ENCODE measurements at regions of chr11 and their contacts with region 1.

Region 1: GRCh38 chr11:9015677-9016076 is 11.9 kb upstream of the NRIP3 start:
- DNase-seq: peak in 2 of 3 donors; percentile 38 to 71
- ATAC-seq: peak; percentile 92 to 95 (median 94)
- H3K4me3 ChIP-seq: no peak overlapping the region
- H3K27ac ChIP-seq: no peak overlapping the region
- H3K4me1 ChIP-seq: no peaks in the 10 kb centered on the region
- H3K27me3 ChIP-seq: no peaks in the 10 kb centered on the region
- CTCF ChIP-seq: peak; percentile 68 to 82 (median 80)
- POLR2A ChIP-seq: no peak

Region 2: GRCh38 chr11:9137293-9138132 is 121.8 kb after region 1 on chr11:
- intact Hi-C with region 1: loop called in 1 of 2 experiments (anchors 10 kb)
- DNase-seq: peak; percentile 71 to 72 (median 71)
- ATAC-seq: peak; percentile 80 to 95 (median 92)
- H3K4me3 ChIP-seq: no peak overlapping the region
- H3K27ac ChIP-seq: no peak overlapping the region
- H3K4me1 ChIP-seq: peaks cover 0 to 21% (median 10%) of the 10 kb centered on the region in 4 donors
- H3K27me3 ChIP-seq: no peaks in the 10 kb centered on the region
- CTCF ChIP-seq: peak; percentile 81 to 89 (median 87)
- POLR2A ChIP-seq: no peak

Region 3: DNA sequence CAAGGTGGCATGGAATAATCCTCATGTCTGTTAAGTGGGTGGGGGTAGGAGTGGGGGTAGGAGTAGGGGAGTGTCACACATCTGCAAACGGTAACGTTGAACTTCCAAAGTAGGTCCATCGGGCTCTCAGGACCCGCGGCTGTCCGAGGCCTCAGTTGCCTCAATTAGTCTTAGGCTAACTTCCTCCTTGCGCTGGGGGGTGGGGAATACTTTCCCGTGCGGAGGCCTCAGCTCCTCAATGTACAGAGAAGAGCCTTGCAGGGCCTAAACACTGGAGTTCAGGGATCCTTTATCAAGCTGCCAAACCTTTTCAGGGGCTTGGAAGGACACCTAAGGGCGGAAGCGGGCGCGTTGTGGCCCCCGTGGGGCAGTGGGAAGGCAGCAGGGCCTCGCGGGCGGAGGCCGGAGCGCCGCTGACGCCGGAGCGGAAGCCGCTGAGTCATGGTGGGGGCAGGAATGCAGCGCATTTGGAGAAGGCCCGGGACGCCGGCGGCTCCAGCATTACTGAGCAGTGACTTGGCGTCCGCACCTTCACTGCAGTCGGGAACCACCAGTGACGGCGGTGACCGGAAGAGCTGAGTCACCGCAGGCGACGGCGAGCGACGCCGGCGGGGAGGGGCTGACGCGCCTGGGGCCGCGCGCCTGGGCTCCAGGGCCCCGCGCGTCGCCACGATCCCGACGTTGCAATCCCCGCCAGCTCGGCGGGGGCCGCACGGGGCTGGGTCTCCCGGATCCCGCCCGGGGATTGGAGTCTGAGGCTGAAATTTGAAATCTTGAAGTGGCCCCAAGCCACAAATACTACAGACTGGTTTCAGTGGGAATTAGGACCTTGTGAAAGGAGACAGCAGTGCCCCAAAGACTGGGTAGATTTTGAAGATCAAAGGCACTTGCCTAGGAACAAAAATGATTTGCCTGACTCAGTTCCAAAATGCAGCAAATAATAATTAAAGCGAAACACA is 348.6 kb after region 1 on chr11:
- intact Hi-C with region 1: no loop called
- DNase-seq: peak; percentile 92 to 97 (median 96)
- ATAC-seq: peak; percentile 98 to 99 (median 99)
- H3K4me3 ChIP-seq: peak overlapping the region; percentile 32 to 60 (median 41)
- H3K27ac ChIP-seq: peak overlapping the region; percentile 90 to 93 (median 93)
- H3K4me1 ChIP-seq: no peaks in the 10 kb centered on the region
- H3K27me3 ChIP-seq: no peaks in the 10 kb centered on the region
- CTCF ChIP-seq: no peak
- POLR2A ChIP-seq: peak; percentile 97

Region 4: GRCh38 chr11:9506489-9507276 is 491.0 kb after region 1 on chr11:
- intact Hi-C with region 1: loop called in 1 of 2 experiments (anchors 10 kb)
- DNase-seq: peak; percentile 63 to 79 (median 66)
- ATAC-seq: peak; percentile 82 to 98 (median 97)
- H3K4me3 ChIP-seq: no peak overlapping the region
- H3K27ac ChIP-seq: no peak overlapping the region
- H3K4me1 ChIP-seq: peaks cover 0 to 18% (median 2%) of the 10 kb centered on the region in 4 donors
- H3K27me3 ChIP-seq: no peaks in the 10 kb centered on the region
- CTCF ChIP-seq: peak; percentile 92 to 95 (median 94)
- POLR2A ChIP-seq: no peak

Measured in right lobe of liver (tissue), 6 donors.